Activated T-helper 1 cell treated with anti-CD3 and anti-CD28 coated beads, Interleukin-12 subunit alpha, Interleukin-12 subunit beta, Interleukin-2, Interleukin-4 antibody, amounts not matched to agents 30 ng/mL and 10 ng/mL and 1 ng/mL, durations not matched to agents 14 hours and 24 hours and 36 hours (primary cell): ENCODE measurements at regions of chr7 and their contacts with region 1.

Region 1: GRCh38 chr7:127708788-127709187 is 56.8 kb downstream of the SND1 start:
- DNase-seq: peak; percentile 53
- H3K4me3 Mint-ChIP-seq: no peak overlapping the region
- H3K27ac Mint-ChIP-seq: no peak overlapping the region
- H3K4me1 Mint-ChIP-seq: peaks cover 23% of the 10 kb centered on the region
- H3K27me3 Mint-ChIP-seq: no peaks in the 10 kb centered on the region

Region 2: DNA sequence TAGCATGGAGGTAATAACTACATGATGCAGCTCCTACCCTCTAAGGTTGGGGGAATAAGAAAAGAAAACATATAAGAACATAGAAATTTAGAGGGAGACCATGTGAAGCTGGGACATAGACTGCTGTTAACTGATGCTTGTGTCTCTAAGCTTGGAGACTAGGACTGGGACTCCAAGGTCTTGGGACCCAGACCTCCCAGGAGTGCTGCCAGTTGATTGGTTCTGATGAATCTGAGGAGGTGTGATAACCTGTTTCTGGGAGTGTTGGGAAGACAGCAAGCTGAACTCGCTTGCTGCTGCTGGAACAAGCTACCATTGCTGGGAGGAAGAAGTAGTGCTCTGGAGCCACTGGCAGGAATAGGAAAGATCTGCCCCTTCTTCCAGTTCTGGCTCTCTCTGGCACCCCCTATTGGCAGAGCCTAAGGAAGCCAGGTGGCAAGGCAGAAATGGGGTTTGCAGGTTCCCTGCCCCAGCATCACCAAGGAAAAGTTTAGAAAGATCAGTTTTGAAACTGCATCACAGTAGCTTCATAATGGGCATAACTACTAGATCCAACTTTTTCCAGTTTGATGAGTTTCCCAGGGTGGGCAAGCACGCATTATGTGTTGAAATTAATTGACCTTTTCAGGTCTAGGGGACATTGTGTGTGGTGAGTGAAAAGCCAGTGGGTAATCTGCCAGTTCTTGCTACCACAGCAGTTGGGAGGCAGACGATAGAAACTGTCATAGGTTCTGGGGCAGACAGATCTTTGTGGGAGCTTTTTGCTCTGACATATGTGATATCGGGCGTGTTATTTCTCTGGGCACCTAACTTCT is 83.9 kb after region 1 on chr7:
- intact Hi-C with region 1: loop called (anchors 2 kb)
- DNase-seq: peak; percentile 4
- H3K4me3 Mint-ChIP-seq: no peak overlapping the region
- H3K27ac Mint-ChIP-seq: peak overlapping the region; percentile 11
- H3K4me1 Mint-ChIP-seq: peaks cover 24% of the 10 kb centered on the region
- H3K27me3 Mint-ChIP-seq: no peaks in the 10 kb centered on the region

Region 3: GRCh38 chr7:128010394-128011127 is 301.8 kb after region 1 on chr7:
- intact Hi-C with region 1: loop called (anchors 1 kb)
- DNase-seq: no peak
- H3K4me3 Mint-ChIP-seq: no peak overlapping the region
- H3K27ac Mint-ChIP-seq: peak overlapping the region; percentile 9
- H3K4me1 Mint-ChIP-seq: no peaks in the 10 kb centered on the region
- H3K27me3 Mint-ChIP-seq: no peaks in the 10 kb centered on the region

Region 4: GRCh38 chr7:128031901-128032604 is 323.3 kb after region 1 on chr7:
- intact Hi-C with region 1: loop called (anchors 1 kb)
- DNase-seq: peak; percentile 20
- H3K4me3 Mint-ChIP-seq: peak overlapping the region; percentile 83
- H3K27ac Mint-ChIP-seq: no peak overlapping the region
- H3K4me1 Mint-ChIP-seq: no peaks in the 10 kb centered on the region
- H3K27me3 Mint-ChIP-seq: peaks cover 23% of the 10 kb centered on the region

Region 5: DNA sequence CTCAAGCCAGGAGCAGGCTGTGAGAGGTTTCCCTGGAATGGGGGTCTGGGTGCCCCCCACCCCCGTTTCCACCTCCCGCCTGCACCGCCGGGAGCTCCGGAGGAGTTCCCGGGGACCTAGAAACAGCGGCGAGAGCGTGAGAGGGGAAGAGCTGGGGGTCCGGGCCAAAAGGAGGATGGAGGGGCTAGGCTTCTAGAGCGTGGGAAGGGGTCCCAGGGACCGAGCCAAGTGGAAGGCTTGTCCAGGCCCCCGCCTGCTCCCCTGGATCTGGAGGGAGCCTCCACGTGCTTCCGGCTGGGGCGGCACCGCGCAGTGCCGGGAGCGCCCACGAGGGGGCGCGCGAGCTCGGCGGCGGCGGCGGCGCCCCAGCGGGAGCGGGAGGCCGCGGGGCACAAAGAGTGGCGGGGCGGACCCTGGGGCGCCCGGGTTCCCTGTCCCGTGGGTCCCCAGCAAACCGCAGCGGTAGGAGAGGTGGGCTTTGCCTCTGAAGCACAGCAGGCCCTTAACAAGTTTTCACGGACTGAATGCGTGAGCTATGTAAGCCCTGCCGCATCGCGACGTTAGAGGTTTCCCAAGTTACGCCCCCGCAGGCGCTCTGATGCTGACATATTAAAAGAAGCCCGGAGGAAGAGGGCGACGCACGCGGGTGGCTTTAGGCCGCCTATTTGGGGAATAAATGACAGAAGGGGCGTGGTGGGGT is 426.9 kb after region 1 on chr7:
- intact Hi-C with region 1: loop called (anchors 1 kb)
- DNase-seq: peak; percentile 53
- H3K4me3 Mint-ChIP-seq: peak overlapping the region; percentile 77
- H3K27ac Mint-ChIP-seq: no peak overlapping the region
- H3K4me1 Mint-ChIP-seq: peaks cover 14% of the 10 kb centered on the region
- H3K27me3 Mint-ChIP-seq: peaks cover 60% of the 10 kb centered on the region

Region 6: GRCh38 chr7:128209229-128210035 is 500.6 kb after region 1 on chr7:
- intact Hi-C with region 1: loop called (anchors 1 kb)
- DNase-seq: peak; percentile 49
- H3K4me3 Mint-ChIP-seq: no peak overlapping the region
- H3K27ac Mint-ChIP-seq: no peak overlapping the region
- H3K4me1 Mint-ChIP-seq: no peaks in the 10 kb centered on the region
- H3K27me3 Mint-ChIP-seq: peaks cover 20% of the 10 kb centered on the region

Region 7: GRCh38 chr7:128322040-128322643 is 613.4 kb after region 1 on chr7:
- intact Hi-C with region 1: loop called (anchors 10 kb)
- DNase-seq: no peak
- H3K4me3 Mint-ChIP-seq: no peak overlapping the region
- H3K27ac Mint-ChIP-seq: peak overlapping the region; percentile 36
- H3K4me1 Mint-ChIP-seq: peaks cover 27% of the 10 kb centered on the region
- H3K27me3 Mint-ChIP-seq: no peaks in the 10 kb centered on the region